A549 (cell line): ENCODE measurements at regions of chr17 and their contacts with region 1.

Region 1: GRCh38 chr17:47633996-47634395 is 15.7 kb upstream of the KPNB1 start:
- DNase-seq: no peak
- ATAC-seq: no peak
- H3K4me3 ChIP-seq: no peak overlapping the region
- H3K27ac ChIP-seq: no peak overlapping the region
- H3K4me1 ChIP-seq: no peaks in the 10 kb centered on the region
- CTCF ChIP-seq: no peak
- EP300 ChIP-seq: no peak
- POLR2A ChIP-seq: no peak
- RAD21 ChIP-seq: no peak

Region 2: GRCh38 chr17:47644324-47644723 is 10.3 kb after region 1 on chr17:
- CTCF ChIA-PET with region 1: interaction called, 14 read pairs
- POLR2A ChIA-PET with region 1: interaction called, 4 read pairs
- DNase-seq: no peak
- ATAC-seq: no peak
- H3K4me3 ChIP-seq: no peak overlapping the region
- H3K27ac ChIP-seq: no peak overlapping the region
- H3K4me1 ChIP-seq: peaks cover 6% of the 10 kb centered on the region
- CTCF ChIP-seq: no peak
- EP300 ChIP-seq: no peak
- POLR2A ChIP-seq: no peak
- RAD21 ChIP-seq: no peak